ENCODE measurements at regions of chr15 and their contacts with region 1.

Region 1: DNA sequence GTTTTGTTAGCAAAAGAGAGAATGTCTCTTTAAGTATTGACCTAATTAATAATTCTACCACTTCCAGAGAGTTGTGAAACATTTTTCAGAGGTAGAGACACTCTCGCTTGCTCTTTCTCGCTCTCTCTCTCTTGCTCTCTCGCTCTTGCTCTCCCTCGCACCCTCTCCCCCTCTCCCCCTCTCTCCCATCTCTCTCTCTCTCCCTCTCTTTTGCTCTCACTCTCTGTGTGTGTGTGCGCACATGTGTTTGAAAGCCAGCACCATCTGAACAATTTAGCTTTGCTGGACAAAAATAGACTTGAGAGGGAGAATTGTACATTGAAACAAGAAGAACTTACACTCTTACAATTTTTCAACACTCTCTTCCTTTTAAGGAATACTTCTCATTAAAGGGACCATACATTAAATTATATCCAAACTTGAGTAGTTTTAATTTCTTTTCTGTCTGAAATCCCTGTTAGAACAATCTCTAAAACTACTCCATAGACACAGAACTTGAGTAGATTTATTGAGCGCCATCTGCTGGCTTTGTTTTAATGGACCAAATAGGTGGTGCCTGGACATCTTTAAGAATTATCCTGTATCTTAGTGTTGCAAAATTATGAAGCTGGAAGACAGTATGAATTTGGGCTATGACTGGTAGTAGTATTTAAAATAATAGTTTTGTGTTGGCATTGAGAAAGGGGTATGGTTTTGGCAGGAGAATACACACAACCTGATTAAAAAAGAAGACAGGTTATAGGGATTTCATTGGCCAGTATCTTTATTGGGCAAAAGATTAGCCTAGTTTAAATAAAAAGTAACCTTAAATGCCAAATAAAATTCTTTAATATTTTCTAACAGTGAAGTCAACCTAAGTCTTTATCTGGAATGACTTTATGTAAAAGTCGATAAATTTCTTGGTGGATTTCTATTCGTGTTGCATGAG is 124.6 kb downstream of the AKAP13 start:
- DNase-seq: peak in 7 of 9 experiments; percentile 11 to 70 (median 51)
- ATAC-seq: no peak
- H3K4me3 ChIP-seq: no peak overlapping the region
- H3K4me3 Mint-ChIP-seq: no peak overlapping the region
- H3K27ac ChIP-seq: no peak overlapping the region
- H3K27ac Mint-ChIP-seq: no peak overlapping the region
- H3K4me1 ChIP-seq: peaks cover 33% of the 10 kb centered on the region
- H3K4me1 Mint-ChIP-seq: peaks cover 69% of the 10 kb centered on the region
- H3K27me3 ChIP-seq: no peaks in the 10 kb centered on the region
- H3K27me3 Mint-ChIP-seq: no peaks in the 10 kb centered on the region
- CTCF ChIP-seq: peak; percentile 84

Region 2: GRCh38 chr15:84981054-84981710 is 523.8 kb before region 1 on chr15:
- CTCF ChIA-PET with region 1: no interaction called
- POLR2A ChIA-PET with region 1: no interaction called
- intact Hi-C with region 1: no loop called
- DNase-seq: peak; percentile 92 to 98 (median 95)
- ATAC-seq: peak; percentile 70
- H3K4me3 ChIP-seq: peak overlapping the region; percentile 78 to 94
- H3K4me3 Mint-ChIP-seq: peak overlapping the region; percentile 94
- H3K27ac ChIP-seq: peak overlapping the region; percentile 93 to 94
- H3K27ac Mint-ChIP-seq: peak overlapping the region; percentile 96
- H3K4me1 ChIP-seq: peaks cover 19% of the 10 kb centered on the region
- H3K4me1 Mint-ChIP-seq: peaks cover 39% of the 10 kb centered on the region
- H3K27me3 ChIP-seq: no peaks in the 10 kb centered on the region
- H3K27me3 Mint-ChIP-seq: no peaks in the 10 kb centered on the region
- CTCF ChIP-seq: no peak

Region 3: DNA sequence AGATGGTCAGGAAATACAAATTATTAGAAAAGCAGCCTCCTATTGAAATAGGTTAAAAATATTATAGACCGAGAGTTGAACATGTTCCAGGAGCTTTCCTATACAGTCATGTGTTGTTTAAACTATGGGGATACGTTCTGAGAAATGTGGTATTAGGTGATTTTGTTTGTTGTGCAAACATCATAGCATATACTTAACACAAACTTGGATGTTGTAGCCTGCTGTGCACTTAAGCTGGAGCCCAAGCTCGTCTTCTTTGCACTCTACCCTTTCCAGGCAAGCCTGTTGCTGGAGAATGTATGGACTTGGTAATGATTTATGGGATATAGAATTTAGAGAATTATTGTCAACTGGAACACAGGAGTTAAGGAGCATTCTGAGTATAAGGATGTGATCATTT is 15.6 kb after region 1 on chr15:
- CTCF ChIA-PET with region 1: interaction called, 13 read pairs
- POLR2A ChIA-PET with region 1: no interaction called
- intact Hi-C with region 1: loop called in 1 of 2 experiments (anchors 2 kb)
- DNase-seq: no peak
- ATAC-seq: no peak
- H3K4me3 ChIP-seq: no peak overlapping the region
- H3K4me3 Mint-ChIP-seq: no peak overlapping the region
- H3K27ac ChIP-seq: no peak overlapping the region
- H3K27ac Mint-ChIP-seq: peak overlapping the region; percentile 10
- H3K4me1 ChIP-seq: no peaks in the 10 kb centered on the region
- H3K4me1 Mint-ChIP-seq: peaks cover 49% of the 10 kb centered on the region
- H3K27me3 ChIP-seq: no peaks in the 10 kb centered on the region
- H3K27me3 Mint-ChIP-seq: no peaks in the 10 kb centered on the region
- CTCF ChIP-seq: no peak

Region 4: DNA sequence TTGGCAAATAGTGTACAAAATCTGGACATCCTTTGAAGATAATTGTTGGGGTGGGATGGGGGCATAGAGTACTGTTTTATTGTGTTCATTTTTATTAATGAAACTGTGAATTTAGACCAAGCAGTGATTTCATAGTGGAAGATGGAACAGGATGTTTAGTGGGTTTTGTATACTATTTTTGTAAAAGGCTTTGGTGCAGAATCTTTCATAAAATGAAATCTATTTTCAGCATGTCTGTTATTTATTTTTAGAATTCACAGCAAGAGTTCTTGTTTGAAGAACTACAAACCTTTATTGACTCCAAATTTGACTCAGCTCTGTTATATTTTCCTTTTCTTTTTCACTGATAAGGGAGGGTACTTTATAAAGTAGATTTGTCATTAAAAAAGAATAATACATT is 20.7 kb after region 1 on chr15:
- CTCF ChIA-PET with region 1: interaction called, 13 read pairs
- POLR2A ChIA-PET with region 1: no interaction called
- intact Hi-C with region 1: loop called in 1 of 2 experiments (anchors 2 kb)
- DNase-seq: no peak
- ATAC-seq: no peak
- H3K4me3 ChIP-seq: no peak overlapping the region
- H3K4me3 Mint-ChIP-seq: no peak overlapping the region
- H3K27ac ChIP-seq: no peak overlapping the region
- H3K27ac Mint-ChIP-seq: no peak overlapping the region
- H3K4me1 ChIP-seq: no peaks in the 10 kb centered on the region
- H3K4me1 Mint-ChIP-seq: peaks cover 32% of the 10 kb centered on the region
- H3K27me3 ChIP-seq: no peaks in the 10 kb centered on the region
- H3K27me3 Mint-ChIP-seq: no peaks in the 10 kb centered on the region
- CTCF ChIP-seq: no peak